Dendritic cell treated with granulocyte-macrophage colony-stimulating factor and Interleukin-4, amounts not matched to agents 40 ng/mL and 50 ng/mL, for 4 days (primary cell): ENCODE measurements at regions of chr15 and their contacts with region 1.

Region 1: GRCh38 chr15:98311566-98312188 is 336.7 kb upstream of the IGF1R start:
- H3K4me3 Mint-ChIP-seq: no peak overlapping the region
- H3K27ac Mint-ChIP-seq: no peak overlapping the region
- H3K4me1 Mint-ChIP-seq: no peaks in the 10 kb centered on the region
- H3K27me3 Mint-ChIP-seq: peaks cover 21% of the 10 kb centered on the region

Region 2: DNA sequence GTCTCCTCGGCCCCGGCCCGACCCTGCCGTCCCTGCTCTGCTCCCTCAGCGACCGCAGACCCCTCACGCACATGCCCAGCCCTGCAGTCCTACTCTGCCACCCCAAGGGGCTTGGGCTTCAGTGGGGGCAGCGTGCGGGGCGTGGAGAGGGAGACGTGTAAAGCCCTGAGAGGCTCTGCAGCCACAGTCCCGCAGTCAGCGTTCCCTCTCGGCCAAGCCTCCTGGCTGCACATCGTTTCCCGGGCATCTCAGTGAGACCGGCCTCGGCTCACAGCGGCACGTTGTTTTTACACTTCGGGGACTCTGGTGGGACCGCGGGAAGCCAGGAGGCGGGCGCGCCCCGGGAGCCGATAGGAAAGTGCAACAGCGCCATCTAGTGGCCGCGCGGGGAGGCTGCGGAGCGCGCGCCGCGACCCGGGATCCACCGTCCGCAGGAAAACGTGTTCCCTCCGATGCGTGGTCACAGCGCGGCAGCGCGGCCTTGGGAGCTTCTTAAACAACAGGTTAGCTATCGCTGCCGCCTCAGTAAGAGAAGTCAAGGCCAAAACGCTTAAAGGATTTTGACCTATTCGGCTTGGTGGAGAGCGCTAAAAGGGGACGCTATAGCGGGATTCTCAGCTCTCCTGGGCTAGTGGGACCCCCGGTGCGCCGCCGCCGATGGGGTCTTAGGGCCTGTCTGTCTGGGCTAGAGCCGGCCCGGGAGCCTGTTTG is 109.9 kb after region 1 on chr15:
- intact Hi-C with region 1: loop called (anchors 1 kb)
- H3K4me3 Mint-ChIP-seq: peak overlapping the region; percentile 18
- H3K27ac Mint-ChIP-seq: no peak overlapping the region
- H3K4me1 Mint-ChIP-seq: peaks cover 6% of the 10 kb centered on the region
- H3K27me3 Mint-ChIP-seq: peaks cover 56% of the 10 kb centered on the region

Region 3: DNA sequence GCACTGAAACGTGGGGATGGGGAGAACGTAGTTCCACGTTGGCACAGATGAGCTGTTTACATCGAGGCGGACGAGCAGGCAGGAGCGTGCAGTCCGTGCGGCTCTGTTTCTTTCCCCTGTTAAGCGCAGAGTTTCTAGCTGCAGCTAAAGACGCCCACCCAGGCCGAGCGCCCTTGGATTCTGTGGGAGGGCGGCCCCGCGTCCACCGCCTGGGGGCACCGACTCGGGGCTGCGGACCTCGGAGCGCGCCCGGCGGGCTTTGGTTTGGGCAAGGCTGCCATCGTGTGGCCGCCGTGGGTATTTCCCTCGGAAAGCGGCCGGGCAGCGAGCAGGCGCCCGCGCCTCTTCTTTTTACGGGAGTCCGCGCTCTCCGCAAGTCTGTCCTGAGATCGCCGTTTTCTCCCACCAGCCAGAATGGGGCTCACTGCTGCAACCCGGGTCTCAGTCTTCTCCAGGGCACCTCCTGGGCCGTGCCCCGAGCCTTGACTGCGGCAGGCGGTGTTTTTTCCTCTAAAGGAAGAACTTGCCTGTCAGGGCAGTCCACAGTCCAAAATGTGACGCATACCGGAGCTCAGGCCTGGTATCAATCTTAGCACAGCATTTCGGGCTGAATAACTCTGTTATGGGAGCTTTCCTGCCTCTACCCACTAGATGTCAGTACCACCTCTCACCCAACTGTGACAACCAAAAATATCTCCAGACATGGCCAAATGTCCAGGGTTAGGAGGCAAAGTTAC is 116.7 kb after region 1 on chr15:
- intact Hi-C with region 1: loop called (anchors 1 kb)
- H3K4me3 Mint-ChIP-seq: peak overlapping the region; percentile 55
- H3K27ac Mint-ChIP-seq: no peak overlapping the region
- H3K4me1 Mint-ChIP-seq: peaks cover 10% of the 10 kb centered on the region
- H3K27me3 Mint-ChIP-seq: peaks cover 50% of the 10 kb centered on the region